Caco-2 (cell line): ENCODE measurements at regions of chr19 and their contacts with region 1.

Region 1: GRCh38 chr19:44258835-44259413 is 762 bp upstream of the ZNF233 start:
- DNase-seq: no peak
- H3K4me3 ChIP-seq: peak overlapping the region; percentile 71; the same call in 1 of the 2 replicates
- H3K4me3 Mint-ChIP-seq: peak overlapping the region; percentile 88
- H3K27ac Mint-ChIP-seq: no peak overlapping the region
- H3K4me1 ChIP-seq: peaks cover 4% of the 10 kb centered on the region; the same call in 1 of the 2 replicates
- H3K4me1 Mint-ChIP-seq: peaks cover 18% of the 10 kb centered on the region
- H3K27me3 ChIP-seq: no peaks in the 10 kb centered on the region
- H3K27me3 Mint-ChIP-seq: no peaks in the 10 kb centered on the region
- CTCF ChIP-seq: no peak

Region 2: DNA sequence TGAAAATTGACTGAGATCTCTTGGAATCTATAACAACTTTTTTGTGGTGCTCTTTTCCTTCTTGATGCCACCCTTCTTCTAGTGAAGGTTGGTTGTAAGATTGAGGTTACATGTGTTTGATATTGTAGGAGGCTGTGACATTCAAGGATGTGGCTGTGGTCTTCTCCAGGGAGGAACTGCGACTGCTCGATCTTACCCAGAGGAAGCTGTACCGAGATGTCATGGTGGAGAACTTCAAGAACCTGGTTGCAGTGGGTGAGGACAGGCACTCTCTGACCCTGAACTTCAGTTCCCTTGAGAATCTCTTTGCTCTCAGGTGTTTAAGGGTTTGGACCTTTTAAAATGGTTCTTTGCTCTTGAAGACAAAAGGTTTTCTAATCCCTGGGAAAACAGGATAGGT is 30.6 kb before region 1 on chr19:
- CTCF ChIA-PET with region 1: no interaction called
- POLR2A ChIA-PET with region 1: no interaction called
- intact Hi-C with region 1: no loop called
- DNase-seq: no peak
- H3K4me3 ChIP-seq: no peak overlapping the region
- H3K4me3 Mint-ChIP-seq: no peak overlapping the region
- H3K27ac Mint-ChIP-seq: no peak overlapping the region
- H3K4me1 ChIP-seq: no peaks in the 10 kb centered on the region
- H3K4me1 Mint-ChIP-seq: no peaks in the 10 kb centered on the region
- H3K27me3 ChIP-seq: no peaks in the 10 kb centered on the region
- H3K27me3 Mint-ChIP-seq: no peaks in the 10 kb centered on the region
- CTCF ChIP-seq: no peak

Region 3: DNA sequence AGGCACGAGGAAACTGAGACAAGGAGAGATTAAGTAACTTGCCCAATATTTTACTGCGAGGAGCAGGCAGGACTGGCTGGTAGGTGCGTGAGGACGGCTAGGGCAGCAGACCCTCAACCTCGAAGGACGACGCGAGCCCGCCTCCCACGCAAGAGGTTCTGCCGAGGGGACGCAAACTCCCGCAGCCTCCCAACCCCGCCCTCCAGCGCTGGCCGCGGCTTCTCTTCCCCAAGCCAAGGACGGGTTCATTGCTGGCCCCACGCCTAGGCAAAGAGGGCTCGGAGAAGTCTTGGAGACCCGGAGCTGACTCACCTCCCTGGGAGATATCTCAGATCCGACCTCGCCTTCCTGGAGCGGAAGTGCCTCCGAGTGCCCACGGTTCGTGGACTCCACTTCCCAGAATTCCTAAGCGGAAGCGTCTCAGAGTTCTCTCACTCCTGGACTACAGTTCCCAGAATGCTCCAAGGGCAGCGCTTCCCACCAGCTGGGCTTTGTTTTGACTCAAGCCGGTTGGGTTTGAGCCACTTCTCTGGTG is 45.8 kb after region 1 on chr19 and contains the start of gene ZNF235:
- CTCF ChIA-PET with region 1: no interaction called
- POLR2A ChIA-PET with region 1: interaction called, 4 read pairs
- intact Hi-C with region 1: loop called (anchors 1 kb)
- DNase-seq: peak; percentile 90 to 93
- H3K4me3 ChIP-seq: peak within 1 kb of the TSS; percentile 75
- H3K4me3 Mint-ChIP-seq: peak within 1 kb of the TSS; percentile 84
- H3K27ac Mint-ChIP-seq: peak within 1 kb of the TSS; percentile 60
- H3K4me1 ChIP-seq: peaks cover 6% of the 10 kb centered on the region; the same call in 1 of the 2 replicates
- H3K4me1 Mint-ChIP-seq: no peaks in the 10 kb centered on the region
- H3K27me3 ChIP-seq: no peaks in the 10 kb centered on the region
- H3K27me3 Mint-ChIP-seq: no peaks in the 10 kb centered on the region
- CTCF ChIP-seq: no peak
- total RNA-seq, gene ZNF235: 9.2 and 9.5 TPM in 2 replicates